Heart left ventricle (tissue), 16 donors: ENCODE measurements at regions of chr21 and their contacts with region 1.

Region 1: DNA sequence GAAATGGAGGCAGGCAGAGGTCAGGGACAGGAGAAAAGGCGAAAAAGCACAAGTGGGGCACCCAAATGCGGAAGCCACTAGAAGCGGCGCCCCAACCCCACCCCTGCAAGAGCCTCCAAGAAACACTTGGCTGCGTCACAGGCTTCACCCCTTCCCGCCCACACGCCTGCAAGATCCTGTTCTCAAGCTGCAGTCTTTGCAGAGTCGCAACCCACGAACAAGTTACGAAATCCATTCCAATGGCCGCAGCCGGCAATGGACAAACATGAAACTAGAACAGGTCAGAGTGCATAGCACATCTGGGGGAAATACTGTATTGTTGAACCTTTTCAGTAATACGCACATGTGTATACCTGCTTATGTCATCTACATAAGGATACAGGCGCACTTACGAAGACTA is 103.6 kb downstream of the PSMG1 start:
- DNase-seq: peak; percentile 65 to 86 (median 81)
- ATAC-seq: peak; percentile 40 to 81 (median 76)
- H3K4me3 ChIP-seq: no peak overlapping the region
- H3K27ac ChIP-seq: peak overlapping the region in 1 of 12 donors; percentile 77
- H3K4me1 ChIP-seq: peaks cover 0 to 49% (median 0%) of the 10 kb centered on the region in 12 donors
- H3K27me3 ChIP-seq: no peaks in the 10 kb centered on the region
- CTCF ChIP-seq: no peak
- POLR2A ChIP-seq: no peak

Region 2: GRCh38 chr21:38743761-38744529 is 335.7 kb before region 1 on chr21:
- intact Hi-C with region 1: no loop called
- DNase-seq: peak in 2 of 5 donors; percentile 32 to 62
- ATAC-seq: peak; percentile 39 to 95 (median 64)
- H3K4me3 ChIP-seq: peak overlapping the region in 5 of 12 donors; percentile 2 to 24 (median 16)
- H3K27ac ChIP-seq: peak overlapping the region in 9 of 12 donors; percentile 10 to 62 (median 46)
- H3K4me1 ChIP-seq: peaks cover 0 to 20% (median 0%) of the 10 kb centered on the region in 12 donors
- H3K27me3 ChIP-seq: no peaks in the 10 kb centered on the region
- CTCF ChIP-seq: no peak
- POLR2A ChIP-seq: no peak

Region 3: GRCh38 chr21:38888991-38889561 is 190.5 kb before region 1 on chr21:
- intact Hi-C with region 1: no loop called
- DNase-seq: no peak
- ATAC-seq: no peak
- H3K4me3 ChIP-seq: no peak overlapping the region
- H3K27ac ChIP-seq: peak overlapping the region in 2 of 12 donors; percentile 9 to 40
- H3K4me1 ChIP-seq: peaks cover 0 to 15% (median 0%) of the 10 kb centered on the region in 12 donors
- H3K27me3 ChIP-seq: no peaks in the 10 kb centered on the region
- CTCF ChIP-seq: no peak
- POLR2A ChIP-seq: no peak

Region 4: DNA sequence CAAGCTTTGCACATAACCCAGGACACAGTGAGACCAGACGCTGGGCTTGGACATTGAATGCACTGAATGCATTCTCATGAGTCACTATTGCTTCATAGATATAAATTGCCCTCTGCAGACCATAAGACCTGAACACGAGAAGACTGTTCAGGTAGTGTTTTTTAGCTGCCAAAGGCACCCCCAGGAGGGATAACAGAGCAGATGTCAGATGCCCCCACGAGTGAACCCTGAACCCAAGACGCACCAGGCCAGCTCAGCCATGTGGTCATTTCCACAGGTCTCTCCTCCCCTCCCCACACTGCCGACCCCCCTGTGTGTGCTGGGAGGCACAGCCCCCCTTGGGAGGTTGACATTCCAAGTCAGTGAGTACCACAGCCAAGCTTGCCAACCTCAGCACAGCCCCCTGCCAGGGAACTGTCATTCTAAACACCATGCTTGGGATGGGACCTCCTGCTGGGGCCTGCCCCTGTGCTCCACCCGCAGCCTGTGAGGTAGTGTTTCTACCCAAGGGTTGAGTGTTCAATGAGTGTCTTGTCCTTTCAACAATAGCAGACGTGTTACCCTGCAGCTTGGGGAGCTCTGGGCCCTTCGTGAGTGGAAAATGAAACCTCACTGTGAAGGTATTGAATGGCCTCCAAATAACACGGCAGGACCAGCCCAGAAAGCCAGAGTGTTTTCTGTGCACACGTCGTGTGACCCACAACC is 35.4 kb after region 1 on chr21:
- intact Hi-C with region 1: loop called in 1 of 10 experiments (anchors 5 kb)
- DNase-seq: peak in 1 of 5 donors; percentile 4
- ATAC-seq: no peak
- H3K4me3 ChIP-seq: no peak overlapping the region
- H3K27ac ChIP-seq: no peak overlapping the region
- H3K4me1 ChIP-seq: peaks cover 0 to 26% (median 2%) of the 10 kb centered on the region in 12 donors
- H3K27me3 ChIP-seq: no peaks in the 10 kb centered on the region
- CTCF ChIP-seq: no peak
- POLR2A ChIP-seq: no peak